ENCODE measurements at regions of chr16 and their contacts with region 1.

Region 1: DNA sequence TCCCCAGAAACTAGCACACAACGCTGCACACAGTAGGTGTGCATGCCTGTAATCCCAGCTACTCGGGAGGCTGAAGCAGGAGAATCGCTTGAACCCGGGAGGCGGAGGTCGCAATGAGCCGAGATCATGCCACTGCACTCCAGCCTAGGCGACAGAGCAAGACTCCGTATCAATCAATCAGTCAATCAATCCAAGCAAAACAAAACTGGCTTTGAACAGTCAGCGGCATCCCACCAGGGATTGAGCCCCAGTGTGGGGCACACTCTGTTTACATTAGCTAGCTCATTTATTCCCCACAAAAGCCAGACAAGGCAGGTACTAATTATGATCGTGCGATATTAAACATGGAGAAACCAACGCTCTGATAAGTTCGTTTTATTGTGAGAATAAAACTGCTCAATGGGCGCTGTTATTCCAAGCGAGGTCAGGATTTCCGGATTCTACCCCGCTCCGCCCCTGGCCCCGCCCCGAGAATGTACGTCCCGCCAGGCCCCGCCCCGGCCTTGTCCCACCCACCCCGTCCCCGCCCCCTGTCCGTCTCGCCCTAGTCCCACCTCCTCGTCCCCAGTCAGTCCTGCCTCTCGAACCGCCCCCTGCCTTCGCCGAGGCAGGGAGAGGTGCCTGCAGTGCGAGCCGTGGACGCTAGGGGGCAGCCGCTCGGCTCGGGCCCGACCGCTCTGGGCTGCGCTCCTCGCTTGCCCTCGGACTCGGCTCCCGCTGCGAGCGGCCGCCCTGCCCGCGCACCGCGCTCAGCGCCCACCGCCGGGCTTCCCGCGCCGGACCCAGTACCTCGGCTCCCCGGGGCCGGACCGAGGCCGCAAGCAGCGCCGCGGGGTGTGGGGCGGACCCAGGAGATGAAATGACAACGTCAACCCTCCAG is at the start of gene VPS4A:
- DNase-seq: peak; percentile 96 to 99 (median 98)
- ATAC-seq: peak; percentile 98
- H3K4me3 ChIP-seq: peak within 1 kb of the TSS; percentile 66 to 79
- H3K4me3 Mint-ChIP-seq: peak within 1 kb of the TSS; percentile 99
- H3K27ac ChIP-seq: peak within 1 kb of the TSS; percentile 72 to 82
- H3K27ac Mint-ChIP-seq: peak within 1 kb of the TSS; percentile 95
- H3K4me1 ChIP-seq: peaks cover 17% of the 10 kb centered on the region
- H3K4me1 Mint-ChIP-seq: peaks cover 27% of the 10 kb centered on the region
- H3K27me3 ChIP-seq: no peaks in the 10 kb centered on the region
- H3K27me3 Mint-ChIP-seq: no peaks in the 10 kb centered on the region
- CTCF ChIP-seq: peak; percentile 73
- total RNA-seq, gene VPS4A: 64.2 to 66.5 TPM

Region 2: GRCh38 chr16:68843482-68844210 is 467.2 kb before region 1 on chr16 and contains the start of gene TANGO6:
- CTCF ChIA-PET with region 1: no interaction called
- POLR2A ChIA-PET with region 1: no interaction called
- intact Hi-C with region 1: loop called in 1 of 2 experiments (anchors 1 kb)
- DNase-seq: peak; percentile 81 to 93 (median 90)
- ATAC-seq: peak; percentile 95
- H3K4me3 ChIP-seq: peak within 1 kb of the TSS; percentile 86 to 94
- H3K4me3 Mint-ChIP-seq: peak within 1 kb of the TSS; percentile 92
- H3K27ac ChIP-seq: peak within 1 kb of the TSS; percentile 78 to 86
- H3K27ac Mint-ChIP-seq: peak within 1 kb of the TSS; percentile 89
- H3K4me1 ChIP-seq: peaks cover 24% of the 10 kb centered on the region
- H3K4me1 Mint-ChIP-seq: peaks cover 29% of the 10 kb centered on the region
- H3K27me3 ChIP-seq: no peaks in the 10 kb centered on the region
- H3K27me3 Mint-ChIP-seq: no peaks in the 10 kb centered on the region
- CTCF ChIP-seq: no peak
- total RNA-seq, gene TANGO6: 12.1 to 16.3 TPM

Region 3: DNA sequence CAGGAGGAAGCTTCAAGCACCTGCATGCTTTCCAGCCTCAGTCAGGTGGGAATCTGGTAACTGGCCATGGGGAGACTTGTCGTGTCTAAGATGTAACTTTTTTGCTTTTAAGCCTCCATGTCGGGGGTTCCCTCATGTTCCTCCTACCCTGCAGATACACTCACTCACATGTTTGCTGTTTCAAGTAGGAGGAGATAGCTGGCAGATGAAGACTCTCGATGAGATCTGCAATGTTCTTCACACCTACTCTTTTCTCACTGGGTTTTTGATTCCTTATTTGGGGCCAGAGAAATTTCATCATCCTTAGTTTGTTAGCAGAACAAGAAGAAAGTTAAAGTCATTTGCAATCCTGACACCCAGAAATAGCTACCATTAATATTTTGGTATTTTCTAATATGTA is 153.7 kb before region 1 on chr16:
- CTCF ChIA-PET with region 1: no interaction called
- POLR2A ChIA-PET with region 1: no interaction called
- intact Hi-C with region 1: no loop called
- DNase-seq: no peak
- ATAC-seq: no peak
- H3K4me3 ChIP-seq: no peak overlapping the region
- H3K4me3 Mint-ChIP-seq: no peak overlapping the region
- H3K27ac ChIP-seq: no peak overlapping the region
- H3K27ac Mint-ChIP-seq: no peak overlapping the region
- H3K4me1 ChIP-seq: no peaks in the 10 kb centered on the region
- H3K4me1 Mint-ChIP-seq: no peaks in the 10 kb centered on the region
- H3K27me3 ChIP-seq: no peaks in the 10 kb centered on the region
- H3K27me3 Mint-ChIP-seq: no peaks in the 10 kb centered on the region
- CTCF ChIP-seq: no peak

Region 4: DNA sequence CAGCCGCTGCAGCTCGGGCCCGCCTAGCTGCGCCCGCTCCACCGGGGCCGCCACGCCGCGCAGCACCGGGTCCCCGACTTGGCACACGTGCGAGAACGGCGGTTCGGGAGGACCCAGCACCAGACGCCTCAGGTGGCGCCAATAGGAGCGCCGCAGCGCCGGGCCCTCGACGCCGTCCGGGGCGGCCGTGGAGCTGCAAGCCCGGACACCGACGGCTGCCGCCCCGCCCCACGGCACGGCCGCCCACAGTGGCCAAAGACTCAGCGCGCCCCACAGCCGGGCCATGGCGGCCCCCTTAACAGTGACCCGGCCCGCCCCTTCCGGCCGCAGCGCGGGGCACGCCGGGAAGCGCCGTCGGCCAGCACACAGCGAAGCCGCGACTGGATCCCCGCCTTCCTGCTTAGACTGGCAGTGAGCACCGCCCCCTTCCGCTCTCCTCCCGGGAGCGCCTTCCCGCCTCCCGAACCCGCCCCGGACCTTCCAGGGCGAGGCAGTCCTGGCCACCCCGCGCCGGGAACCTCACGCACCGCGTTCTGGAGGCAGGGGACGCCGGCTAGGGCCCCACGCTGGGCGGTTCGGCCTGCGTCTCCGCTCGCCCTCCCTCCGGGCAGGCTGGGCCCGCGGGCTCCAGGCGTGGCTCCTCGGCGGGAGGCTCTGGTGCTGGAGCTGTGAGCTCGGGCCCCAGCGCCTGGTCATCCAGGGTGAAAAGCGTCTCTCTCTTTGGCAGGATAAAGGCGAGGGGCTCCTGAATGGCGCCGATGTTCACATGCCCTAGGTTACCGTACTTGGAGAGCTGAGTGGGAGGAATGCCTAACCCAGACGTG is 19.6 kb after region 1 on chr16 and contains the start of gene PDF:
- CTCF ChIA-PET with region 1: interaction called, 5 read pairs
- POLR2A ChIA-PET with region 1: interaction called, 15 read pairs
- intact Hi-C with region 1: loop called (anchors 1 kb)
- DNase-seq: peak in 8 of 9 experiments; percentile 79 to 91 (median 82)
- ATAC-seq: peak; percentile 91
- H3K4me3 ChIP-seq: peak within 1 kb of the TSS; percentile 53 to 83
- H3K4me3 Mint-ChIP-seq: peak within 1 kb of the TSS; percentile 79
- H3K27ac ChIP-seq: peak within 1 kb of the TSS; percentile 60 to 75
- H3K27ac Mint-ChIP-seq: peak within 1 kb of the TSS; percentile 74
- H3K4me1 ChIP-seq: peaks cover 43% of the 10 kb centered on the region
- H3K4me1 Mint-ChIP-seq: peaks cover 52% of the 10 kb centered on the region
- H3K27me3 ChIP-seq: no peaks in the 10 kb centered on the region
- H3K27me3 Mint-ChIP-seq: no peaks in the 10 kb centered on the region
- CTCF ChIP-seq: no peak
- total RNA-seq, gene PDF: 3.3 to 3.6 TPM

Region 5: GRCh38 chr16:69363281-69363717 is 52.4 kb after region 1 on chr16:
- CTCF ChIA-PET with region 1: no interaction called
- POLR2A ChIA-PET with region 1: no interaction called
- intact Hi-C with region 1: no loop called
- DNase-seq: no peak
- ATAC-seq: no peak
- H3K4me3 ChIP-seq: no peak overlapping the region
- H3K4me3 Mint-ChIP-seq: no peak overlapping the region
- H3K27ac ChIP-seq: no peak overlapping the region
- H3K27ac Mint-ChIP-seq: no peak overlapping the region
- H3K4me1 ChIP-seq: no peaks in the 10 kb centered on the region
- H3K4me1 Mint-ChIP-seq: peaks cover 8% of the 10 kb centered on the region
- H3K27me3 ChIP-seq: no peaks in the 10 kb centered on the region
- H3K27me3 Mint-ChIP-seq: no peaks in the 10 kb centered on the region
- CTCF ChIP-seq: no peak

Region 6: DNA sequence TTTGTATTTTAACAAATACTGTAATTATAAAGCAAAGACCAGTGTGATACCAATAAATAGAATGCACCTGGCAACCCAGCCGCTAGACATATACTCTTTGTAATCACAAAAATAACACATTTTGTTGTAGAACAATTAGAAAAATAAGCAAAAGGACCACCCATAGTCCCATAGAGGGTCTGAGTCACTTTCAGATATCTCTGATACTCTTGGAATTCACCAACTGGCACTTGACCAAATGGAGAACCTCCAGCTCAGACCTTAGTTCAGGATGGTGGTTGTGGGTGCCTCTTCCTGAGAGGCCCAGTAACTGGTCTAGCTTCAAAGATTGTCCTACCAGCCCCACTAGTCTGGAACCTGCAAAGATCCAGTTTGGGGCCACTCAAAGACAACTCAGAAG is 75.7 kb after region 1 on chr16:
- CTCF ChIA-PET with region 1: no interaction called
- POLR2A ChIA-PET with region 1: no interaction called
- intact Hi-C with region 1: loop called (anchors 1 to 2 kb)
- DNase-seq: no peak
- ATAC-seq: no peak
- H3K4me3 ChIP-seq: peak overlapping the region in 1 of 2 experiments; percentile 46
- H3K4me3 Mint-ChIP-seq: peak overlapping the region; percentile 89
- H3K27ac ChIP-seq: peak overlapping the region in 1 of 2 experiments; percentile 55
- H3K27ac Mint-ChIP-seq: no peak overlapping the region
- H3K4me1 ChIP-seq: peaks cover 12% of the 10 kb centered on the region
- H3K4me1 Mint-ChIP-seq: peaks cover 30% of the 10 kb centered on the region
- H3K27me3 ChIP-seq: no peaks in the 10 kb centered on the region
- H3K27me3 Mint-ChIP-seq: no peaks in the 10 kb centered on the region
- CTCF ChIP-seq: no peak

Region 7: DNA sequence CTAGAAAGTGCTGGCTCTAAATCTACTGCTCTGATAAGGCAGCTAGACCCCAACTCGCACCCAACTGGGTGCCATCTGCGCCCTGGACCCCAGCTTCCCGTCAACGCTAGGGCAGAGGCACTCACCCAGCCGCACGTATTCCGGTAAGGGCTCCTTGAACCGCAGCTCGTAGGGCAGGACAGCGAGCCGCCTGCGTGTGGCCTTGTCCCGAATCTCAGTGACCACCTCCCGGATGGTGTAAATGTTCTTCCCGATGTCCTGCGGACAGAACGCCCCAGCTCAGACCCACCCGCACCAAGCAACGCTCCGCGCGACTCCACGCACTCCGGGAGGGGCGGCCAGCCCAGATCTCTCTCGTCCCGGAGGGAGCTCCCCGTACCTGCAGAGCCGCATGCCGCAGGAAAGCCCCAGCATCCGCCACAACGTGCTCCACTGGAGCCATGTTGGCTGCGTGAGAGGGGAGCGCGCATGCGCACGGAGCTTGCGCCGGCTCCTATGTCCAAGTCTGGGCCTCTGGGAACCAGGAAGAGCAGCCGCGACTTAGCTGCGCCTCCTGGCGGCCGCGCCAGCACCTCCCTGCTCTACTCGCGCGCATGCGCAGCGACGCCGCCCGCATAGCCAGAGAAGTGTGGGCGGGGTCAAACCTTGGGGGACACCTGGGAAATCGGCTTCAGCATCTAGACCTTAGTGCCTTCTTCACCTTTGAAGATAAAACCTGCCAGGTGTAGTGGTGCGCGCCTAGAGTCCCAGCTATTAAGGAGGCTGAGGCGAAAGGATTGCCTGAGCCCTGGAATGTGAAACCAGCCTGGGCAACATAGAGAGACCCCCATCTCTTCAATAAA is 443.8 kb after region 1 on chr16 and contains the start of gene NOB1:
- CTCF ChIA-PET with region 1: no interaction called
- POLR2A ChIA-PET with region 1: no interaction called
- intact Hi-C with region 1: loop called in 1 of 2 experiments (anchors 2 kb)
- DNase-seq: peak; percentile 94 to 100 (median 98)
- ATAC-seq: peak; percentile 97
- H3K4me3 ChIP-seq: peak within 1 kb of the TSS; percentile 91 to 100
- H3K4me3 Mint-ChIP-seq: peak within 1 kb of the TSS; percentile 100
- H3K27ac ChIP-seq: peak within 1 kb of the TSS; percentile 78 to 84
- H3K27ac Mint-ChIP-seq: peak within 1 kb of the TSS; percentile 98
- H3K4me1 ChIP-seq: peaks cover 9% of the 10 kb centered on the region
- H3K4me1 Mint-ChIP-seq: peaks cover 29% of the 10 kb centered on the region
- H3K27me3 ChIP-seq: no peaks in the 10 kb centered on the region
- H3K27me3 Mint-ChIP-seq: no peaks in the 10 kb centered on the region
- CTCF ChIP-seq: peak; percentile 79
- total RNA-seq, gene NOB1: 46.4 to 48.0 TPM

Region 8: GRCh38 chr16:69781118-69781517 is 470.2 kb after region 1 on chr16:
- CTCF ChIA-PET with region 1: no interaction called
- POLR2A ChIA-PET with region 1: no interaction called
- intact Hi-C with region 1: no loop called
- DNase-seq: peak in 1 of 9 experiments; percentile 32
- ATAC-seq: peak; percentile 64
- H3K4me3 ChIP-seq: no peak overlapping the region
- H3K4me3 Mint-ChIP-seq: no peak overlapping the region
- H3K27ac ChIP-seq: no peak overlapping the region
- H3K27ac Mint-ChIP-seq: peak overlapping the region; percentile 80
- H3K4me1 ChIP-seq: no peaks in the 10 kb centered on the region
- H3K4me1 Mint-ChIP-seq: peaks cover 16% of the 10 kb centered on the region
- H3K27me3 ChIP-seq: no peaks in the 10 kb centered on the region
- H3K27me3 Mint-ChIP-seq: no peaks in the 10 kb centered on the region
- CTCF ChIP-seq: no peak

Measured in CD8-positive, alpha-beta T cell (primary cell).